Activated T-helper 2 cell treated with anti-CD3 and anti-CD28 coated beads, Interferon-gamma antibody, Interleukin-2, Interleukin-4, amounts not matched to agents 10 μg/mL and 5 μg/mL and 100 μg/mL, durations not matched to agents 14 hours and 24 hours and 36 hours (primary cell): ENCODE measurements at regions of chr20 and their contacts with region 1.

Region 1: DNA sequence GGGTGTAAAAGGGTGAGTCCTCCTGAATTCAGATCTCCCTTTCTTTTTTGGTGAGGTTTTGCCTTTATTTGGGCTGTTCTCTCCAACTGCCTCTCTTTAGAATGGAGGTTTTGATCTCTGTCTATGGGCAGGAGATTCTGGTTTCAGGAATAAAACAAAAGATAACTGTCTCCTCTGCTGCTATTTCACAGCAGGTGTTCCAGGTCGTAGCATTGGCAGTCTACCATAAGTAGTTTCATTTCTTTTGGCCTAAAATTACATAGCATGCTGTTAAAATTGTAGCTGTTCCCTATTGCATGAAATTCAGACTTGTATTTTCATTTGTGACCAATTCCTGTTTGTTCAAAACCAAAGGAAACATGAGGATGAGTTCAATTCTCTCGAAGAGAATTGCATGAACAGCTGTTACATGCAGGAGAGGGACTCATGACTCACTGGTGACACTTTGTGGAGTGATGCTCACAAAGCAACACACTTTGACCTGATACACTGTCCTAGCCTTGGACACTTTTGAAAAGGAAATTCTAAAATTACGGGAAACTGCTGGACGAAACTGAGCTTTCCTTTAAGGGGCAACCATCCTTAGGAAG is 76.8 kb upstream of the SIRPG start:
- DNase-seq: no peak
- H3K4me3 Mint-ChIP-seq: no peak overlapping the region
- H3K27ac Mint-ChIP-seq: no peak overlapping the region
- H3K4me1 Mint-ChIP-seq: peaks cover 25% of the 10 kb centered on the region
- H3K27me3 Mint-ChIP-seq: peaks cover 3% of the 10 kb centered on the region

Region 2: GRCh38 chr20:1509237-1509636 is 225.1 kb before region 1 on chr20:
- intact Hi-C with region 1: loop called (anchors 1 kb)
- DNase-seq: no peak
- H3K4me3 Mint-ChIP-seq: no peak overlapping the region
- H3K27ac Mint-ChIP-seq: no peak overlapping the region
- H3K4me1 Mint-ChIP-seq: no peaks in the 10 kb centered on the region
- H3K27me3 Mint-ChIP-seq: peaks cover 45% of the 10 kb centered on the region

Region 3: GRCh38 chr20:1533059-1533458 is 201.3 kb before region 1 on chr20:
- intact Hi-C with region 1: loop called (anchors 1 kb)
- DNase-seq: no peak
- H3K4me3 Mint-ChIP-seq: no peak overlapping the region
- H3K27ac Mint-ChIP-seq: no peak overlapping the region
- H3K4me1 Mint-ChIP-seq: peaks cover 6% of the 10 kb centered on the region
- H3K27me3 Mint-ChIP-seq: peaks cover 4% of the 10 kb centered on the region

Region 4: GRCh38 chr20:1555952-1556351 is 178.4 kb before region 1 on chr20:
- intact Hi-C with region 1: loop called (anchors 1 kb)
- DNase-seq: no peak
- H3K4me3 Mint-ChIP-seq: no peak overlapping the region
- H3K27ac Mint-ChIP-seq: no peak overlapping the region
- H3K4me1 Mint-ChIP-seq: no peaks in the 10 kb centered on the region
- H3K27me3 Mint-ChIP-seq: no peaks in the 10 kb centered on the region

Region 5: GRCh38 chr20:1619861-1620444 is 114.4 kb before region 1 on chr20 and contains the start of gene SIRPB1:
- intact Hi-C with region 1: loop called (anchors 5 kb)
- DNase-seq: no peak
- H3K4me3 Mint-ChIP-seq: no peak within 1 kb of the TSS
- H3K27ac Mint-ChIP-seq: no peak within 1 kb of the TSS
- H3K4me1 Mint-ChIP-seq: peaks cover 51% of the 10 kb centered on the region
- H3K27me3 Mint-ChIP-seq: no peaks in the 10 kb centered on the region
- total RNA-seq, gene SIRPB1: 0.67 and 1.6 TPM in 2 replicates

Region 6: GRCh38 chr20:1657556-1658334 is 76.6 kb before region 1 on chr20 and contains the start of gene SIRPG:
- intact Hi-C with region 1: loop called (anchors 1 kb)
- DNase-seq: no peak
- H3K4me3 Mint-ChIP-seq: peak within 1 kb of the TSS; percentile 83
- H3K27ac Mint-ChIP-seq: peak within 1 kb of the TSS; percentile 90
- H3K4me1 Mint-ChIP-seq: peaks cover 86% of the 10 kb centered on the region
- H3K27me3 Mint-ChIP-seq: no peaks in the 10 kb centered on the region
- total RNA-seq, gene SIRPG: 25.1 and 28.7 TPM in 2 replicates

Region 7: GRCh38 chr20:3521852-3522740 is 1787.7 kb after region 1 on chr20:
- intact Hi-C with region 1: no loop called
- DNase-seq: no peak
- H3K4me3 Mint-ChIP-seq: no peak overlapping the region
- H3K27ac Mint-ChIP-seq: no peak overlapping the region
- H3K4me1 Mint-ChIP-seq: no peaks in the 10 kb centered on the region
- H3K27me3 Mint-ChIP-seq: no peaks in the 10 kb centered on the region